ENCODE measurements at regions of chr4 and their contacts with region 1.

Region 1: DNA sequence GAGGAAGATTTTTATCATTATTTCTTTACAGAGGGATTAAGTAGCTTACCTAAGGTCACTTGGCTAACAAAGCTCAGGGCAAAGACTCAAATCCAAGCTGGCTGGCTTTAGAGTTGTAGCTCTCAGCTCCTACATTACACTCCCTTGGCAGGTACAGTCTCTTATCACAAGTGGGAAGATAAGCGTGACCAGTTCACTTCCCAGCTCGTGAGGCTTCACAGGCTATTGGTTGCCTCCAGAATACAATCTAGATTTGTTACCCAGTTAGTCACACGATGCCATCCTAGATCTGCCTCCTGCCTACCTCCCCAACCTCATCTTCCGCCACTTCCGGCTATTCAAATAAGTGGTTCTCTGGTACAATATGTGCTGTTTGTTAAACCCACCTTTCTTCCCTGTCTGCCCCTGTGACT is 3.7 kb downstream of the MMRN1 start:
- H3K4me3 Mint-ChIP-seq: no peak overlapping the region
- H3K27ac Mint-ChIP-seq: no peak overlapping the region
- H3K4me1 Mint-ChIP-seq: peaks cover 12% of the 10 kb centered on the region
- H3K27me3 Mint-ChIP-seq: peaks cover 1% of the 10 kb centered on the region

Region 2: GRCh38 chr4:89158884-89159503 is 739.3 kb before region 1 on chr4:
- intact Hi-C with region 1: loop called (anchors 2 kb)
- H3K4me3 Mint-ChIP-seq: no peak overlapping the region
- H3K27ac Mint-ChIP-seq: no peak overlapping the region
- H3K4me1 Mint-ChIP-seq: no peaks in the 10 kb centered on the region
- H3K27me3 Mint-ChIP-seq: no peaks in the 10 kb centered on the region

Region 3: DNA sequence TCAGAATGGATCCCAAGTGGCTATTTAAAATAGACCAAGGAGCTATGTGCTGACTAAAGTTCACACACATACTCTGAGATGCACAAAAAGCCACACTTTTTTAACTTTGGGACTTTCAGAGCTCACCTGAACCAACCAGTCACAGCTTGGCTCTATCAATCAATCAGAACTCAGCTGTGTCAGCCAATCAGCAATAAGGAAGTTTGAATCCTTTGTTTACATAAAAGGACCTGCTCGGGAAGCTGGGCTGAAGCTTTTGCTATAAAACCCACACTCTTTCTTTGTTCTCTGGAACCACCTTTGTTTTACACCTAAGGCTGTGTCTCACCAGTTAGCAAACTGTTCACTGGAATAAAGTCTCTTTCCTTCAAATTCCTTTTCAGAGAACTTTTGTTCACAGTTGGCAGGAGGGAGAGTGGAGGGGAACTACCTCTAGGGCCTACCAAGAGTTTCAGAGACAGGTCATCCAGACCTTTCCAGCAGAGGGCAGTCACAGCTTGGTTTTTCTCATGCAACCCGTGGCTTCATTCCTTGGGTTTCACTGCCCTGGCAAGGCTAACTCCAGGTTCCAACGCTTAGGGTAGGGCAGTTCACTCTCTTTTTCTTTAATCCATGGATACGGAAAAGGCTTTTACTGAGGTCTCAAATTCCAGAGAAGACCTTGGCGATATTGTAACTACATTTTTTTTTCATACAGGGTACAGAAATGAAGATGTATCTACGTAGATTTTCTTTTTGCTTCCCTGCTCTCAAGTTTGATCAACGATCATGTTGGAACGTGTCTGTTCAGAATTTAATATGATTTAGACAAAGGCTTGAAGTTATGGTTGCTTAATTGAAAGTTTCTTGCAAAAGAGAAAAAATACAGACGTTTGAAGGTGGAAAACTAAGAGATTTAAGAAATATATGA is 671.4 kb before region 1 on chr4:
- intact Hi-C with region 1: loop called (anchors 2 kb)
- H3K4me3 Mint-ChIP-seq: no peak overlapping the region
- H3K27ac Mint-ChIP-seq: no peak overlapping the region
- H3K4me1 Mint-ChIP-seq: peaks cover 5% of the 10 kb centered on the region
- H3K27me3 Mint-ChIP-seq: no peaks in the 10 kb centered on the region

Region 4: GRCh38 chr4:89657931-89658700 is 240.2 kb before region 1 on chr4:
- intact Hi-C with region 1: loop called (anchors 1 kb)
- H3K4me3 Mint-ChIP-seq: no peak overlapping the region
- H3K27ac Mint-ChIP-seq: no peak overlapping the region
- H3K4me1 Mint-ChIP-seq: peaks cover 4% of the 10 kb centered on the region
- H3K27me3 Mint-ChIP-seq: no peaks in the 10 kb centered on the region